ENCODE measurements at regions of chr15 and their contacts with region 1.

Region 1: GRCh38 chr15:52227456-52227855 is 36.3 kb upstream of the GNB5 start:
- DNase-seq: peak; percentile 61
- H3K4me3 ChIP-seq: no peak overlapping the region
- CTCF ChIP-seq: peak; percentile 88

Region 2: GRCh38 chr15:51801391-51801835 is 426.0 kb before region 1 on chr15:
- CTCF ChIA-PET with region 1: no interaction called
- POLR2A ChIA-PET with region 1: no interaction called
- DNase-seq: no peak
- H3K4me3 ChIP-seq: no peak overlapping the region
- CTCF ChIP-seq: peak; percentile 61

Region 3: GRCh38 chr15:51888593-51889195 is 338.8 kb before region 1 on chr15:
- CTCF ChIA-PET with region 1: interaction called, 27 read pairs
- POLR2A ChIA-PET with region 1: no interaction called
- DNase-seq: no peak
- H3K4me3 ChIP-seq: no peak overlapping the region
- CTCF ChIP-seq: peak; percentile 58

Region 4: GRCh38 chr15:52078876-52079700 is 148.4 kb before region 1 on chr15:
- CTCF ChIA-PET with region 1: interaction called, 13 read pairs
- POLR2A ChIA-PET with region 1: no interaction called
- DNase-seq: no peak
- H3K4me3 ChIP-seq: no peak overlapping the region
- CTCF ChIP-seq: peak; percentile 79

Region 5: GRCh38 chr15:52179278-52180195 is 47.9 kb before region 1 on chr15:
- CTCF ChIA-PET with region 1: interaction called, 66 read pairs
- POLR2A ChIA-PET with region 1: interaction called, 3 read pairs
- DNase-seq: no peak
- H3K4me3 ChIP-seq: peak overlapping the region; percentile 92
- CTCF ChIP-seq: no peak

Region 6: DNA sequence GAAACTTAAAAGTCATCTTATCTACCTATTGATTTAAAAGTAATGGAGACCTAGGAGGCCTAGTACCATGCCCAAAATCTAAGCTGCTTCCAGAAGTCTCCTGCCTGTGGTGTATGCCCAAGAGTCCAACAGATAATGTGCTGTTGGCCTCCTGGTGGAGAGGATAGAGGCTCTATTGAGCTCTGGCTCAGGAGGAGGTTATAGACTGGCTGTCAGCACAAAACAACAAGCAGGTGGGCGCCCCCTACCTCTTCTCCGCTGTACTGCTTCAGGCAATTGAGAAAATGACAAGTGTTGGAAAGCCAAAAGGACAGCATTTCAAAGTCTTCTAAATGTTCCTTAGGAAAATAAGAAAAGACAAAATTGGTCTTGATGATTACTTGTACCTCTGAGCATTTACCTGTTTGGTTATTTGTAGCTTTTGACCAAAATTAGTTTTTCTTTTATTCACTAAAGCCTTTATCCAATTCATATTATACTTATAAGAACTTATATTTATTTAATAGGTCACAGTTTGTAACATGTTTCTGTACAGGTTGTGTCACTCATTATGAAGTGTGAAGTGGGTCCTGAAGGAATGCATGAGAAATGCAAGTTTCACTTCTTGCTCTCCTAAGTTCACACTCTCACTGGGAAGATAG is 19.0 kb before region 1 on chr15:
- CTCF ChIA-PET with region 1: interaction called, 39 read pairs
- POLR2A ChIA-PET with region 1: no interaction called
- DNase-seq: no peak
- H3K4me3 ChIP-seq: no peak overlapping the region
- CTCF ChIP-seq: peak; percentile 79

Measured in AG04449 (cell line).